Activated CD4-positive, alpha-beta memory T cell treated with anti-CD3 and anti-CD28 coated beads for 36 hours (primary cell): ENCODE measurements at regions of chr14 and their contacts with region 1.

Region 1: GRCh38 chr14:75709207-75709812 is 48.3 kb downstream of the TTLL5 start:
- DNase-seq: peak; percentile 69
- H3K4me3 Mint-ChIP-seq: no peak overlapping the region
- H3K27ac Mint-ChIP-seq: no peak overlapping the region
- H3K4me1 Mint-ChIP-seq: no peaks in the 10 kb centered on the region
- H3K27me3 Mint-ChIP-seq: no peaks in the 10 kb centered on the region

Region 2: DNA sequence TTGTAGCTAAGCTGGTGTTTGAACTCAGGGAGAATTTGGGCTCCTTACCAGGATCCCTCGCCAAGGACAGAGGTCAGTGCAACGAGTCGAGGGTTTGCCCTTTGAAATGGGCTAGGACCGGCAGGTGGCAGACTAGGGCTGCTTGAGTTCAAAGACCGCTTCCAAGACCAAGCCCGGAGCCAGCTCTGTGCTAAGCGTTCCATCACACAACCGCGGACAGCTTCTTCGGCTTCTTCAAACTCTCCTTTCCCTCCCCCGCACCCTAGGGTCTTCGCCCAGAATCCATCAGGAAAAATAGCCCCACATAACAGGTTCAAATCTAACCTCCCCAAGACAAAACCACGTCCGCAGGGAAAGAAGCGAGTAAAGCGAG is 131.6 kb before region 1 on chr14:
- CTCF ChIA-PET with region 1: interaction called, 18 read pairs
- POLR2A ChIA-PET with region 1: no interaction called
- intact Hi-C with region 1: no loop called
- DNase-seq: peak; percentile 87
- H3K4me3 Mint-ChIP-seq: peak overlapping the region; percentile 86
- H3K27ac Mint-ChIP-seq: peak overlapping the region; percentile 88
- H3K4me1 Mint-ChIP-seq: peaks cover 13% of the 10 kb centered on the region
- H3K27me3 Mint-ChIP-seq: no peaks in the 10 kb centered on the region

Region 3: DNA sequence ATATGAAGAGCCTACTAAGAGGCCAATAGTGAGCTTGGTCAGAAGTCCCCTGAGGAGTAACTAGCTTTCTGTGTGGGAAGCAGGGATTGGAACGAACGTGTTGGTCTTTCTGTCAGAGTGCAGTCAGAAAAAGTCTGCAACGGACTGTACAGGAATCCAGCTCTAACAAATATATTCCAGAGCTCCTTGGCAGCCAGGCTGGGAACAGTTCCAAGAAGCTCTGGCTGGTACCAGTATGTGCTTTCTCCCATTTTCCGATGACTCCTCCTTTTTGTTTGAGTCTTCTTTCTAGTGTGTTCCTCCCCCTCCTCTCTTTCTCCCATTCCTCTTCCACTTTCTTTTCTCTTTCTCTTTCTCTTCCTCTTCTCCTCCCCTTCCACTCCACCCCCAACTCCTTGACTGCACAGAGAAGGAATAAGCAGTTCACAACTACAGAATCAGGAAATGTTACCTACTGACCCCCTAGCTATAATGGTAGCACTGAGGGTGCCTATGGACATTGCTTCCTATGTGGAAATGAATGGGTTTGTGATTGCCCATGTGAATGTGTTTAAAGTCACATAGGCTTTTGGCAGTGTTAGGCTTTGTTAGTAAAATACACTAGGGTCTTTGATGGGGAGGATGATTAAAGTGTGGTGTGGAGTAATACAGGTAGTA is 11.7 kb after region 1 on chr14:
- CTCF ChIA-PET with region 1: interaction called, 11 read pairs
- POLR2A ChIA-PET with region 1: no interaction called
- intact Hi-C with region 1: no loop called
- DNase-seq: no peak
- H3K4me3 Mint-ChIP-seq: no peak overlapping the region
- H3K27ac Mint-ChIP-seq: no peak overlapping the region
- H3K4me1 Mint-ChIP-seq: peaks cover 13% of the 10 kb centered on the region
- H3K27me3 Mint-ChIP-seq: no peaks in the 10 kb centered on the region

Region 4: GRCh38 chr14:75794615-75795038 is 85.3 kb after region 1 on chr14:
- CTCF ChIA-PET with region 1: interaction called, 13 read pairs
- POLR2A ChIA-PET with region 1: interaction called, 3 read pairs
- intact Hi-C with region 1: no loop called
- DNase-seq: no peak
- H3K4me3 Mint-ChIP-seq: no peak overlapping the region
- H3K27ac Mint-ChIP-seq: no peak overlapping the region
- H3K4me1 Mint-ChIP-seq: no peaks in the 10 kb centered on the region
- H3K27me3 Mint-ChIP-seq: no peaks in the 10 kb centered on the region

Region 5: DNA sequence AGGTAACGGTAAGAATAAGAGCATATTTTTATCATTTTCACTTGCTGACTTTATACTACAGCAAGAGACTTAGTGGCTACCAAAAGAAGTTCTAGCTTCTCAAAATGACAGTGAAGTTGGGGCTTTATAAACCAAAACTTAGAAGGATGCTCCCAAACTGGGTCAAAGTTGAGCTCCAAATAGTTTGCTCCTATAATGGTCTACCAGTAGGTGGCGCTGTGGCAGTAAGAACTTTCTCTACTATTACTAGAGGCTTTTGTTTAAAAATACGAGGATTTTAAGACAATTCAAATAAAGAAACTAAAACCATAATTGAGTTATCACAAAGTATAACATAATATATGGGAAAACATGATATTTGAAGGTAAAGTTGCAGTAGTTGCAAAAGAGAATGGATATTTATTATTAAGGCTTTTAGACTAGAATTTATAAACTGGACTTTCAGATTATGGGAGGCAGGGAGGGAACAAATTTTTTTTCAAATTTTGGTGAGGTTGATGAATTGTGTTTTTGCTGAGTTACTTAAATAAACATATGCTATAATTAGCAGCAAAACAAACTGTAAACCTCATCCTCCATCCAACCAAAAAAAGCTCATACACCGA is 197.5 kb after region 1 on chr14:
- CTCF ChIA-PET with region 1: interaction called, 19 read pairs
- POLR2A ChIA-PET with region 1: no interaction called
- intact Hi-C with region 1: no loop called
- DNase-seq: peak; percentile 70
- H3K4me3 Mint-ChIP-seq: no peak overlapping the region
- H3K27ac Mint-ChIP-seq: no peak overlapping the region
- H3K4me1 Mint-ChIP-seq: no peaks in the 10 kb centered on the region
- H3K27me3 Mint-ChIP-seq: no peaks in the 10 kb centered on the region